Left cardiac atrium (tissue), 4 donors: ENCODE measurements at regions of chr10 and their contacts with region 1.

Region 1: DNA sequence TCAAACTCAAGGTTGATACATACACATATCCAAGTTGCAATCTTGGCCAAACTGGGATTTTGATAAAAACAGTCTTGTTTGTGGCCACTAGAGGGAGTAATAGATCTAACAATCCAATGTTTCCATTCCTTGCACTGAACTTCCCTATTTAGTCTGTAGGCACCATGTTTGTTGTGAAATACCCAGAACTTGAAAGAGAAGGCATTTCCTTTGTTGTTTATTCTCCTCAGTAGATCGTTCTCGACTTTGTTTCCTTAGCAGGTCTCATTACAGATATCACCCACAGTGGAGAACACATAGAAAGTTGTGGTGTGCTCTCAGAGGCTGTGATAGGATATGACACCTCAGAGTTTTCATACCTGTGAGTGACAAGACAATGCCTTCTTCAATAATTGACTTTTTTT is 70.3 kb upstream of the MXI1 start:
- DNase-seq: no peak
- ATAC-seq: peak; percentile 80 to 82

Region 2: DNA sequence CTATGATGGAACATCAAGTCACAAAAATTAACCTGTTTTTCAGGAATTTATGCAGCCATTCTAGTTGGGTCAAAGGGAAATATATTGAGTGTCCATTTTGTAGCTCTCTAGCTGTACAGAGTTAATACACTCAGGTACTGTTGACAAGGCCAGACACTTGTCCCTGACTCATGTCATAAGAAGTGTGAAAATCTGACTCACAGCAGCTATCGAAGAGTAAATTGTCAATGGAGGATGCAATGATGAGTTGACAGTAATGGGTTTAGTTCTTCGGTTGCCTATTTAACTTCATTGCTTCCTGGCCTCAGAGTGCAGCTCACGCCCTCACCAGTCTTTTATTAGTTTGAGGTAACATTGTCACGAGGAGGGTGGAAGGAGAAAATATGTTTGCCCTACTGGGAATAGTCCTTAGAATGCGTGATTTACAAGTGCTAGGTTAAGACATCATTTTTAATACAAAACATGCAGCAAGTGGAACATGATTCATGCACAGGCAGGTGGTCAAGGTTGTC is 468.9 kb before region 1 on chr10:
- intact Hi-C with region 1: no loop called
- DNase-seq: no peak
- ATAC-seq: no peak

Region 3: DNA sequence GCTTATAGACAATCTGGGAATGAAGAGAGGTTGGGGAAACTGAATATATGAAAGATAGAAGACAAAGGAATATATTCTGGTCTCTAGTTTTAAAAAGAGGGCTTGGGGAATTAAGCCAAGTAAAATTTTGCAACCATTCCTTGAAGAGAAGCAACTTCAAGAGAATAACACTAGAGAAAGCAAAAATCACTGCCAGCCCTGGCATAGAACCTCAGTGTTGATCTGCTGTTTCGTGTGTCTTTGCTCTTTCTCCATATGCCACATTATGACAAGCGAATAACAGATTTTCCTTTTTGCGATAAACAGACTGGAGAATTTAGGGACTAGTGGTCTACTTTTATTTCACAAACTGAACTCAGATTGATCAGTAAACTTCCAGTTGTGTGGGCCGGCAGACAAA is 346.5 kb before region 1 on chr10:
- intact Hi-C with region 1: no loop called
- DNase-seq: no peak
- ATAC-seq: peak in 1 of 2 donors; percentile 67

Region 4: DNA sequence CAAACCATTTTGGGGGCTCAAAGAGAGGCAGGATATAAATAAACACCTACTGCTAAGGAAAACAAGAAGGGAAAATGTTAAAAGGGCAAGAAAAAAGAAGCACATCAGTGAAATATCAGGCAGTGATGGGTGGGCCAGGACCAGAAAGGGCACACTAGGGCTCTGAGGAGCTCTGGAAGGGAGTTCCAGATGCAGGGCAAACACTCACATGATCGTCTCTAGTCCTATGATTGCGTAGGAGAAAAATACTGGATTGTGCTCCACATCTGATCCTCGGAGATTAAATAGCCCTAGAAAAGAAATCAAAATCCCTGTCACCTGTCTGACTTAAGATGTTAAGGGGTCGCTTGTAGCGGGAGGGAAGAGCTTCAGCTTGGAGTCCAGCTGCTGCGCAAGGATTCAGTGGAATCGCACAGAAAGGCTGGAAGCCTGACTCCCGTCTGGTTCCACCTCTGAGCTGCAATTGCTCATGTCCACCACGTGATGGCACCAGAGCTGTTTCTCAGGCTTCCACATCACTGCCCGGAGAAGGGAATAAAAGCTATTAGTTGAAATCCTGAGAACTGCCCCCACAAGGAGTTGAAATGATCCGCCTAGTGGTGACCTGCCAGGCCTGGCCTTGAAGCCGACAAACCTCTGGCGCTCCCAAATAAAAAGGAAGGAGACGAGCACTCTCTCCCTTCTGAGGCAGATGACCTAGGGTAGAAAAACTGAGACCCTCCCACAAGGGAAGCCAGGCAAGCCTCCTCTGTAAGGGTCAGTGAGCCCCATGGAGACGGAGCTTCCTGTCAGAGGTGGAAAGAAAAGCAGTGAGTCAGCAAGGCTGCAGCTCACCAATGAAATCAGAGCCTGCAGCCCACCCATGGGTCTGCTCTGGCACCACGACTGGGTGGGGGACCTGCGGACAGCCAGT is 253.0 kb before region 1 on chr10:
- intact Hi-C with region 1: loop called in 1 of 2 experiments (anchors 10 kb)
- DNase-seq: peak; percentile 72
- ATAC-seq: peak; percentile 79 to 83

Region 5: DNA sequence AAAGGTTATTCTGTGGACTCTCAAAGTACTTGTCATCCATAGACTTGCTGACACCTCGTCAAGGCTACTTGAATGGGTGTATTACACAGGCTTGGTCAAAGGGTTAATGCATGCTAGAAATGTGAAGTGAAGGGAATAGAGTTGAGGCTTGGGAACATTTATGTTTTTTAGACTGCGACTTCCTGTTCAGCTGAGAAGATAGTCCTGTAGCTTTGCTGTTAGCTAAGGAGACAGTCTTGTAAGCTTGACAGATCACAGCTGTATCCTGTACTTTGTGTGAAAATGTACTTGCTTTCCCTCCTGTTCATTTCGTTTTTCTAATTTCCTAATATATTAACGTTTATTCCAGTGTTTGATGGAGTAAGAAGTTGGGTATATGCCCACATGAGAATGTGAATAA is 77.2 kb before region 1 on chr10:
- intact Hi-C with region 1: no loop called
- DNase-seq: no peak
- ATAC-seq: peak; percentile 57 to 58

Region 6: GRCh38 chr10:110206995-110207804 is 70.1 kb after region 1 on chr10 and contains the start of gene MXI1:
- intact Hi-C with region 1: loop called in 1 of 2 experiments (anchors 5 kb)
- DNase-seq: peak; percentile 81
- ATAC-seq: peak; percentile 10 to 42
- total RNA-seq, gene MXI1: 38.7 to 43.0 TPM

Region 7: GRCh38 chr10:110225756-110226542 is 88.8 kb after region 1 on chr10:
- intact Hi-C with region 1: loop called (anchors 5 kb)
- DNase-seq: peak; percentile 93
- ATAC-seq: peak; percentile 65 to 69

Region 8: GRCh38 chr10:110279407-110279986 is 142.4 kb after region 1 on chr10:
- intact Hi-C with region 1: loop called (anchors 2 to 5 kb)
- DNase-seq: peak; percentile 45
- ATAC-seq: peak; percentile 76 to 90